ENCODE measurements at regions of chr1 and their contacts with region 1.

Region 1: DNA sequence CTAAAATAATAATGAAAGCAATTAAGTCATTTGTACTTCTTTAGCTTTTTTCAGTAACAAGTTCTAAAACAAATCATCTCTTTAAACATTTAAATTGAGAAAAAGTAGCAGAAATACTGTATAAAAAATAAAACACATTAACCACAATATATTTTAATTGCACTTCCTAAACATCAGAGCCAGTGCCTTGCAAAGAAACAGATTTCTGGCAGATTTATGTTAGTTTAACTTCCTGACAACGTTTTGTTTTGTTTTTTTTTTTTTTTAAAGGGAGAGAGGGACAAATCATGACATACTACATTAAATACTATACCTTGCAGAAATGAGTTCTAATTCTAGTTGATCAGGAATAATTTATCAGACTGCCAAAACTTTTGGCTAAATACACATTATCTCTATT is 11.2 kb downstream of the TMEM59 start:
- DNase-seq: peak in 2 of 3 donors; percentile 44 to 66
- H3K4me3 ChIP-seq: no peak overlapping the region
- H3K27ac ChIP-seq: peak overlapping the region; percentile 25 to 26
- H3K4me1 ChIP-seq: peaks cover 0 to 6% (median 0%) of the 10 kb centered on the region in 4 experiments
- H3K27me3 ChIP-seq: no peaks in the 10 kb centered on the region

Region 2: GRCh38 chr1:54028306-54029251 is 13.2 kb before region 1 on chr1:
- CTCF ChIA-PET with region 1: no interaction called
- POLR2A ChIA-PET with region 1: no interaction called
- DNase-seq: no peak
- H3K4me3 ChIP-seq: no peak overlapping the region
- H3K27ac ChIP-seq: no peak overlapping the region
- H3K4me1 ChIP-seq: no peaks in the 10 kb centered on the region
- H3K27me3 ChIP-seq: no peaks in the 10 kb centered on the region

Region 3: DNA sequence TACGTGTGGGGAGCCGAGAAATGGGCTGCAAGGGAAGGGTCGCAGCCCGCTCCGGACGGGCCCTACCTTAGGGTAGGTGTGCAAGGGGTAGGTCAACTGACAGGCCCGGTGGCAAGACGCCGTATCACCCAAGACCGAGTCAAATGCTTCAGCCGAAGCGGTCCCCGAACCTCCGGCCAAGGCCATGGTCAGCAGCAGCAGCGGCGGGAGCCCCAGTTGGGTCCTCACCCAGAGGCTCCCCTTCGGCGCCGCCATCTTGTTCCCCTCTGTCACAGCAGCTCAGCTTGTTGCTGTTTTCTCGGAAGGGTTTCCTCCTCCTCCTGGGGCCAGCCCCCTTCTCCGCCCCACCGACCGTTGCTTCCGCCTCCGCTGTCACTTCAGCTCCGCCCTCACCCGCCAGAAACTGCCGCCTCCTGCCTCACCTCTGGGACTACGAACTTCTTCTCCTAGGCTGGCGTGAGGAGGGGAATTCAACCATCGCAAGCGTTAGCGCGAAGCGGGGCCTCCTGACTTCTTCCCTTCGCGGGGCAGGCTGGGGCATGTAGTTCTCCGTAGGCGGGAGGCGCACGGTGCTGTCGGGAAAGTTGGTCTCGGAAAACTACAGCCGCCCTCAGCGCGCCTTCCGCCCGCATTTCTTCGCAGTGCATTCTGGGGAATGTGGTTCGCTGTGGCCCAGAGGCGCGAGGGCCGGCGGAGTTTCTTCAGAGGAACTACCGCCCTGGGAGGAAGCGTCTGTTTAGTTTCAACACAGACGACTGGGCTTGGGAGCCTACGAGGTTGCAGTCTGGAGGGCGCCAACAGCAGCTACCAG is 11.3 kb after region 1 on chr1 and contains the starts of genes TCEANC2 and TMEM59:
- CTCF ChIA-PET with region 1: interaction called, 15 read pairs
- POLR2A ChIA-PET with region 1: interaction called, 6 read pairs
- DNase-seq: peak; percentile 100
- H3K4me3 ChIP-seq: peak within 1 kb of the TSS; percentile 94 to 100 (median 98)
- H3K27ac ChIP-seq: peak within 1 kb of the TSS; percentile 91 to 96
- H3K4me1 ChIP-seq: peaks cover 11 to 53% (median 29%) of the 10 kb centered on the region in 4 experiments
- H3K27me3 ChIP-seq: no peaks in the 10 kb centered on the region

Region 4: DNA sequence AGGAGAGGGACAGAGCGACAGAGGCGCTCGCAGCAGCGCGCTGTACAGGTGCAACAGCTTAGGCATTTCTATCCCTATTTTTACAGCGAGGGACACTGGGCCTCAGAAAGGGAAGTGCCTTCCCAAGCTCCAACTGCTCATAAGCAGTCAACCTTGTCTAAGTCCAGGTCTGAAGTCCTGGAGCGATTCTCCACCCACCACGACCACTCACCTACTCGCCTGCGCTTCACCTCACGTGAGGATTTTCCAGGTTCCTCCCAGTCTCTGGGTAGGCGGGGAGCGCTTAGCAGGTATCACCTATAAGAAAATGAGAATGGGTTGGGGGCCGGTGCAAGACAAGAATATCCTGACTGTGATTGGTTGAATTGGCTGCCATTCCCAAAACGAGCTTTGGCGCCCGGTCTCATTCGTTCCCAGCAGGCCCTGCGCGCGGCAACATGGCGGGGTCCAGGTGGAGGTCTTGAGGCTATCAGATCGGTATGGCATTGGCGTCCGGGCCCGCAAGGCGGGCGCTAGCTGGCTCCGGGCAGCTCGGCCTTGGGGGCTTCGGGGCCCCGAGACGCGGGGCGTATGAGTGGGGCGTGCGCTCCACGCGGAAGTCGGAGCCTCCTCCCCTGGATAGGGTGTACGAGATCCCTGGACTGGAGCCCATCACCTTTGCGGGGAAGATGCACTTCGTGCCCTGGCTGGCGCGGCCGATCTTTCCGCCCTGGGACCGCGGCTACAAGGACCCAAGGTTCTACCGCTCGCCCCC is 158.1 kb after region 1 on chr1 and contains the starts of genes CYB5RL and MRPL37:
- CTCF ChIA-PET with region 1: no interaction called
- POLR2A ChIA-PET with region 1: no interaction called
- DNase-seq: peak; percentile 95 to 96 (median 96)
- H3K4me3 ChIP-seq: peak within 1 kb of the TSS; percentile 75 to 97 (median 94)
- H3K27ac ChIP-seq: peak within 1 kb of the TSS; percentile 53 to 85
- H3K4me1 ChIP-seq: peaks cover 10 to 27% (median 22%) of the 10 kb centered on the region in 4 experiments
- H3K27me3 ChIP-seq: no peaks in the 10 kb centered on the region

Measured in common myeloid progenitor, CD34-positive (primary cell).